ENCODE measurements at regions of chr5 and their contacts with region 1.

Region 1: GRCh38 chr5:174311531-174312269 is 266.2 kb downstream of the NSG2 start:
- DNase-seq: no peak
- H3K4me3 ChIP-seq: peak overlapping the region; percentile 47 to 64 (median 54)
- H3K27ac ChIP-seq: no peak overlapping the region
- H3K4me1 ChIP-seq: peaks cover 5 to 12% (median 11%) of the 10 kb centered on the region in 4 donors
- H3K27me3 ChIP-seq: peaks cover 0 to 56% (median 0%) of the 10 kb centered on the region in 4 donors
- CTCF ChIP-seq: peak; percentile 71 to 93 (median 92)
- EP300 ChIP-seq: no peak
- POLR2A ChIP-seq: no peak

Region 2: DNA sequence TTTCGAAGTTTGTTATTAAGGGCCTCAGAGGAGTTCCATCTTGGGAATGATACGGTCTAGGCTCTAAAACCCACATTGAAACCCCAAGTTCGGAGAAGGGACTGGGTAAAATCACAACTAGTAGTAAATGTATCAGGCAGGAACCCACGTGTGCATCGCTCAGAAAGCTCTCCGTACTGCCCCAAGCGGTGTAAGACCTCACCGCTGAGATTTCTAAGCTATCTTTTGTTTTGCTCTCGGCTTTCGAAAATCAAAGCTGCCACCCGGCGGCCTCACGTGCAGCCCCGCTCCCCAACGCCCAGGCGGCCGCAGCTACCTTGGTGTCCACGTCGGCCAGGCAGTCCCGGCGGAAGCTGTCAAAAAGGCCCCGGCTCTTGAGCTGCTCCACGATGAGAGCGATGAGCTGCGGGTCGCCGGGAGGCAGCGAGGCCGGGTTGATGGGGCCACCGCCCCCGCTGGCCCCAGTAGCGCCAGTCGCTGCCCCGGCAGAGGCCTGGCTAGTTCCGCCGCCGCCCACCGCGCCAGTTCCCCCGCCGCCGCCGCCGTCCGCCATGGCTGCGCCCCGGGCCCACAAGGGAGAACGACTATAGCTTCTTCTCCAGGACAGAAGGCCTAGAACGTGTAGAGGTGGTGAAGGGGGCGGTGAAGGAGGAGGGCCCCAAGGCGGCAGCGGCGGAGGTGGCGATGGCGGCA is 695.7 kb before region 1 on chr5:
- intact Hi-C with region 1: loop called (anchors 2 kb)
- DNase-seq: peak; percentile 92
- H3K4me3 ChIP-seq: peak overlapping the region; percentile 76 to 99 (median 92)
- H3K27ac ChIP-seq: peak overlapping the region; percentile 94 to 98 (median 96)
- H3K4me1 ChIP-seq: peaks cover 22 to 54% (median 47%) of the 10 kb centered on the region in 4 donors
- H3K27me3 ChIP-seq: no peaks in the 10 kb centered on the region
- CTCF ChIP-seq: peak; percentile 59 to 72 (median 63)
- EP300 ChIP-seq: no peak
- POLR2A ChIP-seq: no peak

Region 3: GRCh38 chr5:174045470-174046025 is 266.2 kb before region 1 on chr5 and contains the start of gene NSG2:
- intact Hi-C with region 1: loop called (anchors 10 kb)
- DNase-seq: no peak
- H3K4me3 ChIP-seq: no peak within 1 kb of the TSS
- H3K27ac ChIP-seq: no peak within 1 kb of the TSS
- H3K4me1 ChIP-seq: no peaks in the 10 kb centered on the region
- H3K27me3 ChIP-seq: peaks cover 0 to 17% (median 0%) of the 10 kb centered on the region in 4 donors
- CTCF ChIP-seq: peak; percentile 24 to 41 (median 33)
- EP300 ChIP-seq: no peak
- POLR2A ChIP-seq: no peak
- total RNA-seq, gene NSG2: 3.4 to 5.4 (median 3.9) TPM

Region 4: GRCh38 chr5:174667521-174667920 is 355.8 kb after region 1 on chr5:
- intact Hi-C with region 1: no loop called
- DNase-seq: no peak
- H3K4me3 ChIP-seq: no peak overlapping the region
- H3K27ac ChIP-seq: no peak overlapping the region
- H3K4me1 ChIP-seq: no peaks in the 10 kb centered on the region
- H3K27me3 ChIP-seq: peaks cover 0 to 6% (median 0%) of the 10 kb centered on the region in 4 donors
- CTCF ChIP-seq: no peak
- EP300 ChIP-seq: no peak
- POLR2A ChIP-seq: no peak

Region 5: DNA sequence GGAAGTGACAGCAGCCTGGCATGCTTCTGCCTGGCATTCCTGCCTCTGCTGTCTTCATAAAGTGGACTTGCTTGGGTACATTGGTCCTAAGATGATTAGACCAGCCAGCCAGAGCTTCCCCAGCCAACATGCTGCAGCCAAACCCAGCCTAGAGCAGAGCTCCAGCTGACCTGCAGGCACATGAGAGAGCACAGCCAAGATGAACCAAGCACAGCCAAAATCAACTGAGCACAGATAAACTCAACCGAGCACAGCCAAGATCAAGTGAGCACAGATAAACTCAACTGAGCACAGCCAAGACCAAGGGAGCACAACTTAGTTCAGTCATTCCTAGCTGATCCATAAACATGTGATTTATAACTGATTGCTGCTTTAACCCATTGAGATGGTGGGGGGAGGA is 679.2 kb after region 1 on chr5:
- intact Hi-C with region 1: no loop called
- DNase-seq: peak; percentile 75
- H3K4me3 ChIP-seq: no peak overlapping the region
- H3K27ac ChIP-seq: no peak overlapping the region
- H3K4me1 ChIP-seq: peaks cover 0 to 11% (median 6%) of the 10 kb centered on the region in 4 donors
- H3K27me3 ChIP-seq: no peaks in the 10 kb centered on the region
- CTCF ChIP-seq: no peak
- EP300 ChIP-seq: no peak
- POLR2A ChIP-seq: no peak

Measured in esophagus muscularis mucosa (tissue), 4 donors.